B cell (primary cell): ENCODE measurements at regions of chr19 and their contacts with region 1.

Region 1: DNA sequence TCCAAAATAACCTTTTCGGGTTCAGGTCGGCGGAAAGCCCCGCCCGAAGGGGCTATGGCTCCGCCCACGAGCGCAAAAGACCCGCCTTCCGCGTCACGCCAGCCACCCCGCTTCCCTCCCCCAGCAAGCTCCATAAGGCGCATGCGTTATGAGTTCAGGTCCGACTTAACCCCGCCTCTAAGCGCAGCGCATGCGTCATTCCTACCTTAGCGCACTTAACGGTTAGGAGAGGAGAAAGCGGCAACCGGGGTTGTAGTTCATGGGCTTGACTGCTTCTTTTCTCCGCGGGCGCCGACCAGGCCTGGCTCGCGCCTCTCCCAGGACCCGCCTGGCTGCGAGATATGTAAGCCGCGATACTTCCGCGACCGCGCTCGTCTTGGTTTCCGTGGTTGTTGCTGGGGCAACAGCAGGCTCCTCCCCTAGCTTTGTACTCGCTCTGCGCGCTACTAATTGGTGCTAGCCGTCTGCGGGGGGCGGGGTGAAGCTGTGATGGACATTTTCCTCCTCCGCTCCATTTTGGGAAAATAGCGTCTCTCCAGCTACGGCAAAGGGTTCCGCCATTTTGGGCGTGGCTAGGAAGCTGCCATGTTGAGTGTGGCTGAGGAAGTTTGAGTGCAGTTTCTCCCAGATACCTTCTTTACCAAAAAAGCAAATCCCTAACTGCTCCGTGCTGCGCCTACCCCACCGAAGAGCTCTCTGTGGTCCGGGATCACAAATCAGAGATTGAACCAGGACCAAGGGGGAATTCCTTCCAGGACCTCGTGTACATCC is at the start of gene B9D2:
- DNase-seq: peak; percentile 99
- ATAC-seq: peak; percentile 92
- H3K4me3 ChIP-seq: peak within 1 kb of the TSS; percentile 75 to 97 (median 86)
- H3K4me3 Mint-ChIP-seq: peak within 1 kb of the TSS; percentile 95
- H3K27ac ChIP-seq: peak within 1 kb of the TSS; percentile 99 to 100
- H3K27ac Mint-ChIP-seq: peak within 1 kb of the TSS; percentile 100
- H3K4me1 ChIP-seq: peaks cover 12 to 24% of the 10 kb centered on the region in 2 donors
- H3K4me1 Mint-ChIP-seq: peaks cover 27% of the 10 kb centered on the region
- H3K27me3 ChIP-seq: no peaks in the 10 kb centered on the region
- H3K27me3 Mint-ChIP-seq: no peaks in the 10 kb centered on the region
- CTCF ChIP-seq: no peak
- total RNA-seq, gene B9D2: 17.5 and 17.8 TPM in 2 replicates

Region 2: DNA sequence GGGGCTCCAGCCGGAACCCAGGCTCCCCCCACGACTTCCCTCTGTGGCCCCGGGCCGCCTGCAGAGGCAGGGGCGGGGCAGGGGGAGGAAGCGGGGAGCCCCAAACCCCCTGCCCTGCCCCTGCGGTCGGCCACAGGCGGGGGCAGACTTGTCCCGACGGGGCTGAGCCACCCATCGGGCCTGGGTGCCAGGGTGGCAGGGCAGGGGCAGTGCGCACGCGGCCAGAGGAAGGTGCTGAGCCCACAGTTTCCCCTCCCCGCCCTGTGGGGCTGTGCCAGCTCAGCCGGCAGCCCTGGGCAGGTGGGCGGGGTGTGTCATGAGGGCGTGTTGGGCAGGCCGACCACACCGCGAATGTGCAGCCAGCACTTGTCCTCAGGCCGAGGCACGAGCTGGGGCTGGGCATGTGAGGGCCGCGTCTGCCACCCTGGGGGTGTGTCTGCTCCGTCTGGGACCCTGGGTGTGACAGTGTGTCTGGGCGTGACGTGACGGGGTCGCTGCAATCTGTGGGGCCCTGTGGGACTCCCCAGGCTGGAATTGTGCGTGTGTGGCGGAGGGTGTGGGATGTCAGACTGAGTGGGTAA is 36.3 kb before region 1 on chr19:
- CTCF ChIA-PET with region 1: interaction called, 3 read pairs
- POLR2A ChIA-PET with region 1: interaction called, 19 read pairs
- intact Hi-C with region 1: no loop called
- DNase-seq: peak; percentile 90
- ATAC-seq: peak; percentile 78
- H3K4me3 ChIP-seq: peak overlapping the region; percentile 8 to 72 (median 39)
- H3K4me3 Mint-ChIP-seq: peak overlapping the region; percentile 88
- H3K27ac ChIP-seq: peak overlapping the region; percentile 76 to 97
- H3K27ac Mint-ChIP-seq: peak overlapping the region; percentile 98
- H3K4me1 ChIP-seq: peaks cover 59 to 80% of the 10 kb centered on the region in 2 donors
- H3K4me1 Mint-ChIP-seq: peaks cover 72% of the 10 kb centered on the region
- H3K27me3 ChIP-seq: no peaks in the 10 kb centered on the region
- H3K27me3 Mint-ChIP-seq: no peaks in the 10 kb centered on the region
- CTCF ChIP-seq: no peak

Region 3: GRCh38 chr19:41397086-41398049 is 33.4 kb after region 1 on chr19 and contains the starts of genes BCKDHA and EXOSC5:
- CTCF ChIA-PET with region 1: no interaction called
- POLR2A ChIA-PET with region 1: interaction called, 5 read pairs
- intact Hi-C with region 1: loop called (anchors 1 kb)
- DNase-seq: peak; percentile 100
- ATAC-seq: peak; percentile 98
- H3K4me3 ChIP-seq: peak within 1 kb of the TSS; percentile 84 to 100 (median 90)
- H3K4me3 Mint-ChIP-seq: peak within 1 kb of the TSS; percentile 96
- H3K27ac ChIP-seq: peak within 1 kb of the TSS; percentile 94 to 96
- H3K27ac Mint-ChIP-seq: peak within 1 kb of the TSS; percentile 99
- H3K4me1 ChIP-seq: peaks cover 27 to 28% of the 10 kb centered on the region in 2 donors
- H3K4me1 Mint-ChIP-seq: peaks cover 45% of the 10 kb centered on the region
- H3K27me3 ChIP-seq: no peaks in the 10 kb centered on the region
- H3K27me3 Mint-ChIP-seq: no peaks in the 10 kb centered on the region
- CTCF ChIP-seq: no peak
- total RNA-seq, gene BCKDHA: 20.6 and 25.2 TPM in 2 replicates
- total RNA-seq, gene EXOSC5: 14.1 and 16.1 TPM in 2 replicates

Region 4: DNA sequence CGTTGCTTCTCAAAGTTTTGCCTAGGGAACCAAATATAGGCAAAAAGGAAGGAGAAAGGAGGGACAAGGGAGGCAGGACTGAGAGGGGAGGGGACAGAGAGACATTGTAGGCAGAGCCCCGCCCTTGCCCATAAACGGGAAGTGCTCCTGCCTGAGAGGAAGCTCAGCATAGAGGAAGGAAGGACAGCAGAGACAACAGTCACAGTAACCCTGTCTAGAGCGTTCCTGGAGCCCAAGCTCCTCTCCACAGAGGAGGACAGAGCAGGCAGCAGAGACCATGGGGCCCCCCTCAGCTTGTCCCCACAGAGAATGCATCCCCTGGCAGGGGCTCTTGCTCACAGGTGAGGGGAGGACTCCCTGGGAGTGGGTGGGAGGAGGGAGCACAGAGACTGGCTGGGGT is 212.1 kb after region 1 on chr19 and contains the start of gene CEACAM21:
- CTCF ChIA-PET with region 1: interaction called, 5 read pairs
- POLR2A ChIA-PET with region 1: no interaction called
- intact Hi-C with region 1: loop called (anchors 2 kb)
- DNase-seq: peak; percentile 80
- ATAC-seq: peak; percentile 100
- H3K4me3 ChIP-seq: peak within 1 kb of the TSS; percentile 41 to 85 (median 59)
- H3K4me3 Mint-ChIP-seq: peak within 1 kb of the TSS; percentile 82
- H3K27ac ChIP-seq: peak within 1 kb of the TSS; percentile 68 to 84
- H3K27ac Mint-ChIP-seq: peak within 1 kb of the TSS; percentile 95
- H3K4me1 ChIP-seq: peaks cover 18 to 20% of the 10 kb centered on the region in 2 donors
- H3K4me1 Mint-ChIP-seq: peaks cover 25% of the 10 kb centered on the region
- H3K27me3 ChIP-seq: no peaks in the 10 kb centered on the region
- H3K27me3 Mint-ChIP-seq: no peaks in the 10 kb centered on the region
- CTCF ChIP-seq: no peak
- total RNA-seq, gene CEACAM21: 18.9 and 19.3 TPM in 2 replicates